ENCODE measurements at regions of chr19 and their contacts with region 1.

Region 1: DNA sequence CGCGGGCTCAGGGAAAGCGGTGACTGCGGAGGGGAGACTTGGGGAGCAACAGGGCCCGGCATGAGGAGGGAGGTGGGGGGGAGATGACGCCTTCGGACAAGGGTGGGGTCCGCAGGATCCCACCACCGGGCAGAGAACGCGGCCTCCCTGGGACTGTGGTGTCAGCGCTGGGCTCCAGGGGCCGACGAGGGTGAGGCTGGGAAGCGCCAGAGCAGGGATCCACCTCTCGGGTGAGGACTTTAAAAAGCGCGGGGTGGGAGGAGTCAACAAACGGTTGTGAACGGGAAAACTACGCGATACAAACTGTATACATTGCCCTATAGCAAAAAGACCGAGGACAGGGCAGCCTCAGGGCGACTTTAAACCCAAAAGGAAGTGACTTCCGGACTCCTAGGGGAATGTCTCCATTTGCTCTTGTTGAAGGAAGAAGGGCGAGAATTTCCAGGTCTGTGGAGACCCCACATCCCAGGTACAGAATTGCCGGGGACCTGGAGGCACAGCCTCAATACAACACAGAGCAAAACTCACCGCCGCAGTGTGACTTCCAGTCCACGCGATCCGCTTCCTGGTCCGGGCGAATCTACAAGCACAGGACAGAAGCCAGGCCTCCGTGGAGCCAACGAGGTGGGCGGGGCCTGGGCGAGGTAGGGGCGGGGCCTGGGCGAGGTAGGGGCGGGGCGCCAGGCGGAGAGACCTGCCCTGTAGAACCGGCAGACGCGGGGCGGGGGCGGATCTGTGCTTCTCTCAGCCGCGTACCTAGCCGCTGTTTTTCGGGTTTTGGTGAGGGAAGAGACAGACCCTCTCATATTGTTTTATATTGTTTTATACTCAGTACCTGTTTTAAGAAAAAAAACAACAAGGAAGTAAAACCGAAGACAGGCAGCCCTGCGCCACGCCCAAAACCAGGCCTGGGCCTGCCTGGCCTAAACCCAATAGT is at the start of gene ZNF888:
- DNase-seq: peak; percentile 95
- H3K4me3 Mint-ChIP-seq: peak within 1 kb of the TSS; percentile 79
- H3K27ac Mint-ChIP-seq: peak within 1 kb of the TSS; percentile 80
- H3K4me1 Mint-ChIP-seq: peaks cover 42% of the 10 kb centered on the region
- H3K27me3 Mint-ChIP-seq: no peaks in the 10 kb centered on the region
- CTCF ChIP-seq: no peak
- total RNA-seq, gene ZNF888: 25.5 and 27.0 TPM in 2 replicates

Region 2: GRCh38 chr19:52962394-52963246 is 39.5 kb after region 1 on chr19 and contains the start of gene ZNF816:
- CTCF ChIA-PET with region 1: no interaction called
- intact Hi-C with region 1: loop called (anchors 5 kb)
- DNase-seq: peak; percentile 97
- H3K4me3 Mint-ChIP-seq: peak within 1 kb of the TSS; percentile 95
- H3K27ac Mint-ChIP-seq: peak within 1 kb of the TSS; percentile 86
- H3K4me1 Mint-ChIP-seq: no peaks in the 10 kb centered on the region
- H3K27me3 Mint-ChIP-seq: no peaks in the 10 kb centered on the region
- CTCF ChIP-seq: no peak
- total RNA-seq, gene ZNF816: 16.5 and 17.5 TPM in 2 replicates